OCI-LY7 (cell line): ENCODE measurements at regions of chr15 and their contacts with region 1.

Region 1: GRCh38 chr15:100929641-100930042 is 10.5 kb downstream of the LRRK1 start:
- DNase-seq: peak; percentile 92
- H3K4me3 ChIP-seq: peak overlapping the region; percentile 53
- H3K27ac ChIP-seq: peak overlapping the region; percentile 99
- H3K4me1 ChIP-seq: peaks cover 99% of the 10 kb centered on the region
- CTCF ChIP-seq: no peak

Region 2: DNA sequence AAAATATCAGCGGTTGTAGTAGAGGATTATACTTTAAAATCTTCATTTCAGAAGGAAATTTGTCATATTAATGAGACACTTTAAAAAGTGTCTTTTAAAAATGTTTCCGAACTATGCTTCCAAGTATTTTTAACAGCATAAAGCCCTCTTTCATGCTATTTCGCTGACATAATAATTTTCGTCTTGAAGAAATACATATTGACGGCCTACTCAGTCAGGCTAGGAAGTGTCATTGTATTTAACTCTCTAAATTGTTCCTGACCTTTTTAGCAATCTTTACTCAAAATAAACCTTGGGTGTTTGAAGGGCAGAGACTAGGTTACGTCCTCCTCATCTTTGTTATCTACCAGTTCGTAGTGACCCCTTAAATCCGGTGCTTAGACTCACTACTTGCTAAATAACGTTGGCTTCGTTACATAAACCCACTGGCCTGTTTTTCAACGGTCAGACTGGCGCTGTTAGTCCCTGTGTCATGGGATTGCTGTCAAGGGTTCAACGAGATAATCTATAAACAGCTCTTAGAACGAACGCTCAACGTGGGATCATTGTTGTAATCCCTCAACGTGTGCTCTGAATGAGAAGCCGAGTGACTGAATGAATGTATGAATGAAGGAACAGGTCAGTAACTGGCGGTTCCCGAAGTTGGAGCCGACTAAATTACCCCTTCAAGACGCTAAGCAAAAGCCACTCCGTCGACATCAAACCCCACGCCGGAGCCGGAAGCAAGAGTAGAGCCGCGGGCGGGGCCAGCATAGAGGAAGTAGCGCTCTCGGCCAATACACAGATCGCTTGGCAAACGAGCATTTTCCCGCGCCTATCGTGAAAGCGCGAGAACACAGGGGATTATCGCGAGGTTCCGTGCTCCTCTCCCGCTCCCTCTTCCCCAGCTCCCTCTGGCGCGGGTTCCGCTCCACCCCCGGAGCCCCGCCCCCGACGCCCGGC is 1678.9 kb before region 1 on chr15:
- CTCF ChIA-PET with region 1: no interaction called
- POLR2A ChIA-PET with region 1: interaction called, 3 read pairs
- intact Hi-C with region 1: loop called (anchors 5 kb)
- DNase-seq: peak; percentile 99
- H3K4me3 ChIP-seq: peak overlapping the region; percentile 97
- H3K27ac ChIP-seq: peak overlapping the region; percentile 88
- H3K4me1 ChIP-seq: peaks cover 30% of the 10 kb centered on the region
- CTCF ChIP-seq: no peak

Region 3: GRCh38 chr15:100170291-100171210 is 759.1 kb before region 1 on chr15:
- CTCF ChIA-PET with region 1: no interaction called
- POLR2A ChIA-PET with region 1: no interaction called
- intact Hi-C with region 1: no loop called
- DNase-seq: no peak
- H3K4me3 ChIP-seq: no peak overlapping the region
- H3K27ac ChIP-seq: no peak overlapping the region
- H3K4me1 ChIP-seq: no peaks in the 10 kb centered on the region
- CTCF ChIP-seq: no peak

Region 4: GRCh38 chr15:100612539-100612938 is 317.1 kb before region 1 on chr15:
- CTCF ChIA-PET with region 1: no interaction called
- POLR2A ChIA-PET with region 1: no interaction called
- intact Hi-C with region 1: no loop called
- DNase-seq: no peak
- H3K4me3 ChIP-seq: no peak overlapping the region
- H3K27ac ChIP-seq: no peak overlapping the region
- H3K4me1 ChIP-seq: no peaks in the 10 kb centered on the region
- CTCF ChIP-seq: no peak

Region 5: DNA sequence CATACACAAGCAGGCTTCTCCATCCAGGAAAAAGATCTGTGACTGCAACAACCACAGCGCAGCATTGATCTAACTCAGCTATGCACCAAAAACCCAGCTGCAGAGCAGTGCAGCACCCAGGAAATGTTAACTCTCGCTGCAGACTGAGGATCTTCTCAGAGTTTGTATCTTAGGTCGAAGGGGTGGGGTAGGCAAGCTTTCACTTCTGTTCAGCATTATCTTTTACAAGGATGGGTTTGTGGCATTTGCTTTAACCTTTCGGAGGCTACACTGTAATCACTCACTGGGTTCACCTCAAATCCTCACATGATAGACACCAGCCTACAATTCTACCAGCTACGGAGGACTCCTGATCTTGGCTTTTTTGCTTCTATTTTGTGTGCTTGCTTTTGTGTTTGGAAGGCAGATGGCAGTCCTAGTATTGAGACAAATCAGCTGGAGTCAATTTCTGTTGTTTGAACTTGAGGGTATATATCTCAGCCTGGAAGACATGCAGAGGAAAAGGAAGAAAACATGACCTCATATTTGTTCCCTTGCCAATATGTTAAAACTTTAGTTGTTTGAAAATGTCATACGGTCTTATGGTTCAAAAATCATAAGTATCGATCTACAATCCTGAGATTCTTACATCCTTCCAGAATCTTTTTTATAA is 14.7 kb after region 1 on chr15:
- CTCF ChIA-PET with region 1: interaction called, 3 read pairs
- POLR2A ChIA-PET with region 1: interaction called, 17 read pairs
- intact Hi-C with region 1: no loop called
- DNase-seq: peak; percentile 33
- H3K4me3 ChIP-seq: no peak overlapping the region
- H3K27ac ChIP-seq: peak overlapping the region; percentile 43
- H3K4me1 ChIP-seq: peaks cover 70% of the 10 kb centered on the region
- CTCF ChIP-seq: no peak